ENCODE measurements at regions of chr2 and their contacts with region 1.

Region 1: DNA sequence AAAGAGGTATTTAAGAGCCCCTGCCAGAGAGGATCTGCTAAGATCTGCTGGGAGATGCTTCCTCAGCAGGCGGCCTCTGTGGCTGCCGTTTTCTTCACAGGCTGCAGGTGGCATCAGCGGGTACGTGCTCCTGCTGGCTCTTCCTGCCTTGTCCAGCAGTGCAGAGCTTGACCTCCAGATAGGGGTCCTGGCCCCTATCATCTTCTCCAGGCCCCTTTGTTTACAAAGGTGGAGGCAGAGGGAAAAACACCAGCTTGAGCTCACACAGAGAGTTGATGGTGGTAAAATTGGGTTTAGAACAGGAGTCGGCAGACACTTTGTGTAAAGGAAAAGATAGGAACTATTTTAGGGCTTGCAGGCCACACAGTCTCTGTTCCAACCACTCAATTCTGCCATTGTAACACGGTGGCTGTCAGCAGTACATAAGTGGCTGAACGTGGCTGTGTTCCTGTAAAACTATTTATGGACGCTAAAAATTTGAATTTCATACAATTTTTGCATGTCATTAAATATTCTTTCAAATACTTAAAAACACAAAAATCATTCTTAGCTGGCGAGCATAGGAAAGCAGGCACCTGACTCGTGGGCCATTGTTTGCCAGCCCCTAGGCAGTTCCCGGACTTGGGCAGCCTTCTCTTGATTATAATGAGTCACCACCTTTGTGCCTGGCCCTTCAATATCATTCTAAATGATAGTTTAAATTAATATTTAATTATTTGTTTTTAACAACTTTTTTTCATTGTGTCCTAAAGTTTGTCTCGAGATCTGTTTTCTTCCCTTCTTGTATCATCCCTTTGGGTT is 98.2 kb upstream of the B3GNT7 start:
- DNase-seq: peak; percentile 63
- ATAC-seq: peak; percentile 98
- H3K4me3 ChIP-seq: no peak overlapping the region
- H3K27ac ChIP-seq: no peak overlapping the region
- H3K4me1 ChIP-seq: peaks cover 18% of the 10 kb centered on the region
- H3K27me3 ChIP-seq: no peaks in the 10 kb centered on the region
- CTCF ChIP-seq: peak; percentile 95
- EP300 ChIP-seq: no peak
- POLR2A ChIP-seq: no peak
- RAD21 ChIP-seq: peak; percentile 92

Region 2: GRCh38 chr2:231227309-231228162 is 69.8 kb before region 1 on chr2:
- CTCF ChIA-PET with region 1: interaction called, 4 read pairs
- POLR2A ChIA-PET with region 1: no interaction called
- in situ Hi-C with region 1: no loop called
- intact Hi-C with region 1: loop called (anchors 2 kb)
- DNase-seq: peak; percentile 84
- ATAC-seq: peak; percentile 99
- H3K4me3 ChIP-seq: no peak overlapping the region
- H3K27ac ChIP-seq: no peak overlapping the region
- H3K4me1 ChIP-seq: peaks cover 14% of the 10 kb centered on the region
- H3K27me3 ChIP-seq: no peaks in the 10 kb centered on the region
- CTCF ChIP-seq: peak; percentile 95
- EP300 ChIP-seq: no peak
- POLR2A ChIP-seq: no peak
- RAD21 ChIP-seq: peak; percentile 92

Region 3: DNA sequence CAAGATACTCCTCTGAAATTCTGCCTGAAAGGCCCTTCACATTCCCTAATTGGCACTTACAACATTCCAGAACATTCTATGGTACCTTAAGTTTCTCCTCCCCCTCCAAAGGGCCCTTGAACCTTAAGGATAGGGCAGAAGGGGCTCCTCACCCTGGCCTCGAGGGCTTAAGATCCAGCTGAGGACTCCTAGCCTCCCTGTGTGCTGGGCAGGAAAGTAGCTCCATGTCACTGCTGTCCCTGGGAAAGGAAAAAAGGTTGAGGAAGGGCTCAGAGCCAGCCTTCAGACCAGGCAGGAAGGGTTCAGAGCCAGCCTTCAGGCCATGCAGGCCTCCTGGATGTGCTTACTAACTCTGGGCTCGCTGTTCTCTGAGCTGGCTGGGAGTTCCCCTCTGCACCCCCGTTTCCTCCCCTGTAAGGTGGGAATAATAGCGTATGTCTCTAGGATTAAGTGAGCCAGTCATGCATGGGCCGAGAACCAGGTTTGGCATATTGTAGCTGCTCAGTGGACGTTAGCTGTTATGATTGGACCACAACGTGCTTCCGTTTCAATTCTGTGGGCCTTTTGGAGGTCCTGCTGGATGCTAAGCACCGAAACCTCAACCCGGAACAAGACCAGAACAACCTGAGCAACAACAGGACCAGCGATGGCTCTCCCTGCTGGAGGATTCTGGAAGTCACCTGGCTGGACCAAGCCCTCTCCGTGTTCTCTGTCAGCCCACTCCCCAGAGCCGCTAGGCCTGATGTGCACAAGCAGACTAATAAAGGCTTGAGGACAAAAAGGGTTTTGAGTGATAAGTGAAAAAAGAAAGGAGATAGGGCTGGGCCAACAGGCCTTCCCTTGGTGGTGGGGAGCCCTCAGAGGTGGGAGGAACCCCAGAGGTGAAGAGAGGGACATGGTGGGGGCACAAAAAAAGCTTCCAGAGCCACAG is 97.2 kb after region 1 on chr2:
- CTCF ChIA-PET with region 1: interaction called, 5 read pairs
- POLR2A ChIA-PET with region 1: no interaction called
- in situ Hi-C with region 1: loop called (anchors 10 kb)
- intact Hi-C with region 1: loop called (anchors 1 kb)
- DNase-seq: peak; percentile 59
- ATAC-seq: peak; percentile 68
- H3K4me3 ChIP-seq: peak overlapping the region in 1 of 3 experiments; percentile 61; a peak in 1 of 6 replicates
- H3K27ac ChIP-seq: no peak overlapping the region
- H3K4me1 ChIP-seq: peaks cover 28% of the 10 kb centered on the region
- H3K27me3 ChIP-seq: peaks cover 17 to 78% of the 10 kb centered on the region in 2 experiments
- CTCF ChIP-seq: peak; percentile 71
- EP300 ChIP-seq: no peak
- POLR2A ChIP-seq: no peak
- RAD21 ChIP-seq: peak; percentile 12; the same call in 1 of the 2 replicates

Region 4: GRCh38 chr2:231399853-231400680 is 102.8 kb after region 1 on chr2:
- CTCF ChIA-PET with region 1: interaction called, 17 read pairs
- POLR2A ChIA-PET with region 1: no interaction called
- in situ Hi-C with region 1: loop called (anchors 10 kb)
- intact Hi-C with region 1: no loop called
- DNase-seq: peak; percentile 41
- ATAC-seq: peak; percentile 89
- H3K4me3 ChIP-seq: peak overlapping the region; percentile 7 to 62 (median 29); a peak in 5 of 6 replicates
- H3K27ac ChIP-seq: no peak overlapping the region
- H3K4me1 ChIP-seq: peaks cover 16% of the 10 kb centered on the region
- H3K27me3 ChIP-seq: peaks cover 4 to 74% of the 10 kb centered on the region in 2 experiments
- CTCF ChIP-seq: no peak
- EP300 ChIP-seq: no peak
- POLR2A ChIP-seq: no peak
- RAD21 ChIP-seq: no peak

Region 5: GRCh38 chr2:231452799-231453508 is 155.6 kb after region 1 on chr2:
- CTCF ChIA-PET with region 1: interaction called, 11 read pairs
- POLR2A ChIA-PET with region 1: interaction called, 5 read pairs
- in situ Hi-C with region 1: no loop called
- intact Hi-C with region 1: loop called (anchors 1 kb)
- DNase-seq: peak; percentile 23
- ATAC-seq: peak; percentile 7
- H3K4me3 ChIP-seq: no peak overlapping the region
- H3K27ac ChIP-seq: peak overlapping the region; percentile 11
- H3K4me1 ChIP-seq: peaks cover 10% of the 10 kb centered on the region
- H3K27me3 ChIP-seq: no peaks in the 10 kb centered on the region
- CTCF ChIP-seq: no peak
- EP300 ChIP-seq: no peak; a peak in 1 of 4 replicates
- POLR2A ChIP-seq: peak; percentile 47 to 77
- RAD21 ChIP-seq: no peak

Region 6: DNA sequence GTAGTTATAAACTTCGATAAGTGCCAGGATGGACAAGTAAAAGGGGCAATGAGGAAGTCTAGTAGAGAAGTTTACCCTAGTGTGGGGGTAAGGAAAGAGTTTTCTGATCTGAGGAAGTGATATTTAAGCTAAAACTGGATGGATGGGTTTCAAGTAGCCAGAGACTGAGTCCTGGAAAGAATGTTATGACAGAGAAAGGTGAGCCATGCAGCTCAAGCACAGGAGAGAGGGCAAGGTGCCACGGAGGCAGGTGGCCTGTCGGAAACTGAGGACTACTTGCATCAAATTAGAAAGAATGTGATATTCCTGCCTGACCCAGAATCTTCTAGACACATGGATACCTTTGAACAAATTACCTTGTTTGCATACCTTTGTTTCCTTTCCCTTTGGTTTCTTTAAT is 206.5 kb after region 1 on chr2:
- CTCF ChIA-PET with region 1: no interaction called
- POLR2A ChIA-PET with region 1: no interaction called
- in situ Hi-C with region 1: no loop called
- intact Hi-C with region 1: no loop called
- DNase-seq: no peak
- ATAC-seq: no peak
- H3K4me3 ChIP-seq: no peak overlapping the region
- H3K27ac ChIP-seq: no peak overlapping the region
- H3K4me1 ChIP-seq: no peaks in the 10 kb centered on the region
- H3K27me3 ChIP-seq: peaks cover 0 to 17% of the 10 kb centered on the region in 2 experiments; a peak in 2 of 5 replicates
- CTCF ChIP-seq: no peak
- EP300 ChIP-seq: no peak
- POLR2A ChIP-seq: no peak
- RAD21 ChIP-seq: no peak

Measured in HepG2 (cell line).